Uterus (tissue), 4 donors: ENCODE measurements at regions of chr14 and their contacts with region 1.

Region 1: DNA sequence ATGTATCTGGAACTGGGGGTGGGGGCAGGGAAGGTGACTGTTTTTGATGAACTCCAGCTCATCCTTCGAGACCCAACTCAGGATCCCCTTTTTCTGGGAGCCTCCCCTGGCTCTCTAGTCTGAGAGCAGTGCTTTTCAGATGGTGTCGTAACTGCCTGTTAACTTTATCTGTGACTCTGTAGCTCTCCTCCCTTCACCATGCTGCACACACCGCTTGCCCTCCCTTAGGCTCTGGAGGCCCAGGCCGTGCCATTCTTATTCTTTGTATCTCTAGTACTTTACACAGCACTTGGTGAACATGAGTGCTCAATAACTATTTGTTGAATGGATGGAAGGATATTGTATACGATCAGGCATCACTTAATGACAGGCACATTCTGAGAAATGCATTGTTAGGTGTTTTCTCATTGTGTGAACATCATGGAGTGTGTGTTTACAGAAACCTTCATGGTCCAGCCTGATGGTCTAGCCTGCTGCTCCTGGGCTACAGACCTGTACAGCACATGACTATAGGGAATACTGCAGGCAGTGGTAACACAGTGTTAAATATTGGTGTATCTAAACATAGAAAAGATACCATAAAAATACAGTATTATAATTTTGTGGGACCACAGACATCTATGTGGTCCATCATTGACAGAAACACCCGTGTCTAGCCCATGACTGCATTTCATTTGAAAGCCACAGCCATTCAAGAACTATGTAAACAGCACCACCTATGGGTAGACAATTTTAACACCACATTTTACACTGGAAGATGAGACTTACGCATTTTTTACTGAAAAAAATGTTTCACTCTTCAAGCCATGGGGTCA is 91.8 kb downstream of the EML1 start:
- DNase-seq: peak in 1 of 2 donors; percentile 40
- H3K4me3 ChIP-seq: no peak overlapping the region
- H3K27ac ChIP-seq: no peak overlapping the region
- H3K4me1 ChIP-seq: peaks cover 2 to 12% of the 10 kb centered on the region in 2 donors
- H3K27me3 ChIP-seq: no peaks in the 10 kb centered on the region
- CTCF ChIP-seq: peak; percentile 77 to 87 (median 85)
- POLR2A ChIP-seq: no peak

Region 2: GRCh38 chr14:99683619-99684355 is 201.3 kb before region 1 on chr14 and contains the start of gene CYP46A1:
- intact Hi-C with region 1: loop called (anchors 5 kb)
- DNase-seq: peak; percentile 100
- H3K4me3 ChIP-seq: peak within 1 kb of the TSS; percentile 72 to 85
- H3K27ac ChIP-seq: peak within 1 kb of the TSS; percentile 80 to 95
- H3K4me1 ChIP-seq: peaks cover 0 to 7% of the 10 kb centered on the region in 2 donors
- H3K27me3 ChIP-seq: no peaks in the 10 kb centered on the region
- CTCF ChIP-seq: peak in 2 of 4 experiments; percentile 5 to 31
- POLR2A ChIP-seq: peak in 1 of 2 donors; percentile 35
- total RNA-seq, gene CYP46A1: 0.26 to 6.4 (median 1.7) TPM

Region 3: DNA sequence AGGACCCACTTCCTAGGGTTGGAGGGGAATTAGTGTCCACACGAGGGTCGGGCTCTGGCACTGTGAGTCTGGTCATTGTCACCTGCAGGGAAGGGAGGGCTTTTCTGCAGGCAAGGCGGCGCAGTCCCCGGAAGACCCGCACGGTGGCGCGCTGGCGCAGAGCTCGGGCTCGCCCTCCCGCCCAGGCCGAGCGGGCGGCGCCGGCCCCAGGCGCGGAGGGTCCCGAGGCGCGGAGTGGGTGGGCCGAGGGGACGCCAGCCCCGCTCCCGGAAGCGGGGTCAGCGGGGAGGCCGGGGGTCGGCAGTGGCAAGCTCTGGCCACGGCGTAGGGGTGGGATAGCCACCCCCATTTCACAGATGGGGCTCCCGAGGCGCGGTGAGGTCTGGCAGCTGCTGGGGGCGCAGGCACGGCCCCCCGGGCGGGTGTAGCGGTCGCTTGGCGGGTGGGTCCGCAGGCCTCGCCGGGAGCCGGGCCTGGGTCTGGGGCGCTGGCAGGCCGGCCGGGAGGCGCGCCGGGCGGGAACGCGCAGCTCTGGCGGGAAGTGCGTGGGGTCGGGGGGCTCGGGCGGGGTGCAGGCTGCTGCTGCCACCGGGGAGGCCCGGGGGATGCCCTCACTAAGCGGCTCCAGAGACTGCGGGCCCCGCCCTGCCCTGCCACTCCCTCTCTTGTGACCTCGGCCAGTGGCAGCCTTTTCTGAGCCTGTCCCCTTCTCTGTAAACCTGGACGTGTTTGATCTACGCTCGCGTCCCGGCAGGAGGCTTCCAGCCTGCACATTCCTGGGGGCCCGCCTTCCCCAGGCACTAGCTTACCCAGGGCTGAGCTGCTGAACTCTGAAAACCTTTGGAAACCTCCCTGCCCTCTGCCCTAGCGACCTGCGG is 154.8 kb before region 1 on chr14:
- intact Hi-C with region 1: loop called (anchors 2 kb)
- DNase-seq: peak; percentile 57 to 78
- H3K4me3 ChIP-seq: peak overlapping the region; percentile 32 to 36
- H3K27ac ChIP-seq: peak overlapping the region in 1 of 2 donors; percentile 39
- H3K4me1 ChIP-seq: peaks cover 0 to 7% of the 10 kb centered on the region in 2 donors
- H3K27me3 ChIP-seq: no peaks in the 10 kb centered on the region
- CTCF ChIP-seq: peak; percentile 79 to 98 (median 96)
- POLR2A ChIP-seq: no peak

Region 4: GRCh38 chr14:99802301-99803105 is 82.5 kb before region 1 on chr14:
- intact Hi-C with region 1: no loop called
- DNase-seq: no peak
- H3K4me3 ChIP-seq: no peak overlapping the region
- H3K27ac ChIP-seq: no peak overlapping the region
- H3K4me1 ChIP-seq: peaks cover 0 to 4% of the 10 kb centered on the region in 2 donors
- H3K27me3 ChIP-seq: no peaks in the 10 kb centered on the region
- CTCF ChIP-seq: no peak
- POLR2A ChIP-seq: no peak